ENCODE measurements at regions of chr3 and their contacts with region 1.

Region 1: DNA sequence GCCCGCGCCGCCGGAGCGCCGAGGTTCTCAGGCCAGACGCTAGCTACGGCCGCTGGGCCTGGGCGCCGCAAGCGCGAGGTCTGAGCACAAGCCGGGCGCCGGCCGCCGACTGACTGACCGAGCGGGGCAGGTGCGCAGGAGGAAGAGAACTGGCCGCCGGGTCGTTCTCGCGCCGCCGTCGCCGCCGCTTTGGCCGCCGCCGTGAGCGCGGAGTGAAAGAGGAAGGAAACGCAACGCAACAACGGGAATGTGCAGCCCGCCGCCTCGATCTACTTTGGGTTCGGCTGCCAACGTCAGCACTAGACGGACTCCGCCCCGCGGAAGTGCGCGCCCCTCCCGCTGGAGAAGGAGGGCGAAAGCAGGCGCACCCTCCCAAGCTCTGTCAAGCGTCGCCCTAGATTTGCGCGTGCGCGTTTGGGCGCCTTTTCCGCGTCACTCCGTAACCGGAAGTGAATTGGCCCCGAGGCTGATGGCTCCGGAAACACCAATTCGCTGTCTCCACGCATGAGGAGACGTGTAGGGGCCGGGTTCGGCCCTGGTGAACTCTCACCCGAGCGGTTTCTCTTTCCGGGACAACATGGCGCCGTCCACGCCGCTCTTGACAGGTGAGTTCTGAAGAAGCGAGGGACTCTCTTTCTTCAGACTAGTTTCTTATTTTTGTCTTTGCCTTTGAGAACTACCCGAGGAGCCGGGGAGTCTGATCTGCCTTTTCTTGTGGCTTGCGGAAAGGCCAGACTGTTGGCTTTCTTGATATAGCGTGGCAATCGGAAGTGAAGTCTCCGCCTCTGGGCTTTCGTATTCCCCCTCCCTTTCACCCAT is at the starts of genes EIF2A and SERP1:
- DNase-seq: peak; percentile 99
- H3K4me3 Mint-ChIP-seq: peak within 1 kb of the TSS; percentile 85
- H3K27ac Mint-ChIP-seq: peak within 1 kb of the TSS; percentile 97
- H3K4me1 Mint-ChIP-seq: peaks cover 61% of the 10 kb centered on the region
- H3K27me3 Mint-ChIP-seq: no peaks in the 10 kb centered on the region
- total RNA-seq, gene EIF2A: 81.7 to 86.4 TPM
- total RNA-seq, gene SERP1: 98.4 to 98.5 TPM

Region 2: DNA sequence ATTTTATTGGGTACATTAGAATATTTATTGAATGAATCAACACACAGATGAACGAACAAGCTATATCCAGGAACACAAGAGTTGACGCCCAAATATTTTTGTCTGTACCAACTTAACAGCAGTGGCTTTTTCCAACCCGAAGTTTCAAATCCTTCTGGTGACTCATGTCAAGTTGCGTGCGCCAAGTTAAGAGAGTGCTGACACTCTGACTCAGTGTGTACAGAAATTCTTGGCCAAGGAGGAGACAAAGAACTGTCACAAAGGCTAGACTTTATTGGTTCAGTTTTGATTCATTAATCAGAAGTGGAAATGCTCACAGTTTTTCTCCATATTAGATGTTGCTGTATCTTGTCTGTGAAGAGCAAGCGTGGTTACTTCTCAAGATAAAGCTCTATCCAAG is 197.9 kb before region 1 on chr3:
- CTCF ChIA-PET with region 1: no interaction called
- POLR2A ChIA-PET with region 1: no interaction called
- DNase-seq: peak; percentile 19
- H3K4me3 Mint-ChIP-seq: no peak overlapping the region
- H3K27ac Mint-ChIP-seq: no peak overlapping the region
- H3K4me1 Mint-ChIP-seq: peaks cover 4% of the 10 kb centered on the region
- H3K27me3 Mint-ChIP-seq: peaks cover 14% of the 10 kb centered on the region

Region 3: GRCh38 chr3:150408221-150409102 is 138.0 kb before region 1 on chr3 and contains the start of gene TSC22D2:
- CTCF ChIA-PET with region 1: interaction called, 4 read pairs
- POLR2A ChIA-PET with region 1: interaction called, 73 read pairs
- DNase-seq: peak; percentile 93
- H3K4me3 Mint-ChIP-seq: peak within 1 kb of the TSS; percentile 80
- H3K27ac Mint-ChIP-seq: peak within 1 kb of the TSS; percentile 91
- H3K4me1 Mint-ChIP-seq: peaks cover 33% of the 10 kb centered on the region
- H3K27me3 Mint-ChIP-seq: peaks cover 4% of the 10 kb centered on the region
- total RNA-seq, gene TSC22D2: 13.9 to 15.0 TPM

Region 4: DNA sequence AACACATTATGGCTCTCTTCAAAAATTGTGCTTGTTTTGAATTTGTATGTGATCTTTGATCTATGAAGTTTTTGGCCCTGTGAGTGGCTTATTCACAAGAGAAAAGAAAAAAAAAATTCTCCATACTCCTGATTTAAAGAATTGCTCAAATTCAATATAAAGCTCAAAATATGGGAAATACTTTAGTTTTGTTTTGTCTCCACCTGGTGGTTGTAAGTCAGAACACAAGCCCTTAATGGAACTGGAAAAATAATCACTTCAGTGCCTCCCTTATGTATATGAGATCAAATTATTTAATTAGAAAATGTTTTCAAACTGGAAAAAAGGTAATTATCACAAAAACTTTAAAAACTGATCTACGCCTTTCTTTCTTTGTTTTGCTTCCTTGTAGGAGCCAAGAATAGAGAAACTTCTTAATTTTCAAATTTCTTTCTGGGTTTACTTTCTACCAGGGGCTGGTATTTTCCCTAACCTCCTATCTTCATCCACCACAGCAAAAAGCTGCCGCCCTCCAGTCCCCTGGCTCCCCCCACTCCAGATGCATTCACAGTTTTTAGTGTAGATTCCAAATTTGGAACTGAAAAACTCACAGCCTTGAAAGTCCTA is 50.8 kb before region 1 on chr3:
- CTCF ChIA-PET with region 1: no interaction called
- POLR2A ChIA-PET with region 1: no interaction called
- DNase-seq: no peak
- H3K4me3 Mint-ChIP-seq: no peak overlapping the region
- H3K27ac Mint-ChIP-seq: no peak overlapping the region
- H3K4me1 Mint-ChIP-seq: no peaks in the 10 kb centered on the region
- H3K27me3 Mint-ChIP-seq: no peaks in the 10 kb centered on the region

Region 5: GRCh38 chr3:150582620-150583019 is 36.2 kb after region 1 on chr3:
- CTCF ChIA-PET with region 1: interaction called, 3 read pairs
- POLR2A ChIA-PET with region 1: interaction called, 14 read pairs
- DNase-seq: no peak
- H3K4me3 Mint-ChIP-seq: peak overlapping the region; percentile 49
- H3K27ac Mint-ChIP-seq: peak overlapping the region; percentile 75
- H3K4me1 Mint-ChIP-seq: peaks cover 22% of the 10 kb centered on the region
- H3K27me3 Mint-ChIP-seq: no peaks in the 10 kb centered on the region

Region 6: DNA sequence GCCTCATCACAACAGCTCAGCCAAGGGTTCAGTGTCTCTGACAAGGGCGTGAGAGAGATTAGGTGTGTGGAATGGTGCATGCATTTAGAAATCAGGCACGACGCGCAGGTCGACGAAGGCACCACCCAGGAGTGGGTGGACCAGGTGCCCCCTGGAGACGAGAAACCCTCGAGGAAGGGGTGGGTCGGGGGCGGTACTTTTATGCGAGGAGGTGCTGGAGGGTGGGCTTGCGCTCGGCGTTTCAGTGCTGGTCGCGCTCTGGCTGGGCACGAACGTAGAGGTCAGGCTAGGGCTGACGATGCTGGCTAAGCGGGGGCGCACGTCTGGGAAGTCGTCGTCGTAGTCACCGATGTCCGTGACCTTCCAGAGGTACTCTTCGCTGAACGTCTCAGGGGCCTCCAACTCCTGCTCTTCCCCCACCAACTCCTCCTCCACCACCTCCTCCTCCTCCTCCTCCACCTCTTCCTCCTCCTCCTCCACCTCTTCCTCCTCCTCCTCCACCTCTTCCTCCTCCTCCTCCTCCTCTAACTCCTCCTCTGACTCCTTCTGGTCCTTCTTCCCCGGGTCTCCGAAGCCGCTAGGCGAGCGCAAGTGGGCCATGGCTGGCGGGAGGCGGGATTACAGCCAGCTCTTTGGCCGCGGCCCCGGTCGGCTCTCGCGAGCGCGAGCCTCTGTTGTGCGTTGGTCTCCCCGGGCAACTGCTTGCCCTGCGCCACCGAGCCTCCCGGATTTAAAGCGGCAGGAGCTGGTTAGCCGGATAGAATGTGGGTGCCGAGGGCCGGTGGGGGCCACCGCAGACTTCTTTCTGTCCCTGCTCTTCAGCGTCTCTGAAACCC is 157.1 kb after region 1 on chr3 and contains the start of gene ERICH6:
- CTCF ChIA-PET with region 1: interaction called, 4 read pairs
- POLR2A ChIA-PET with region 1: interaction called, 40 read pairs
- DNase-seq: peak; percentile 89
- H3K4me3 Mint-ChIP-seq: peak within 1 kb of the TSS; percentile 83
- H3K27ac Mint-ChIP-seq: peak within 1 kb of the TSS; percentile 86
- H3K4me1 Mint-ChIP-seq: peaks cover 29% of the 10 kb centered on the region
- H3K27me3 Mint-ChIP-seq: peaks cover 6% of the 10 kb centered on the region
- total RNA-seq, gene ERICH6: 0.38 to 0.81 TPM

Region 7: DNA sequence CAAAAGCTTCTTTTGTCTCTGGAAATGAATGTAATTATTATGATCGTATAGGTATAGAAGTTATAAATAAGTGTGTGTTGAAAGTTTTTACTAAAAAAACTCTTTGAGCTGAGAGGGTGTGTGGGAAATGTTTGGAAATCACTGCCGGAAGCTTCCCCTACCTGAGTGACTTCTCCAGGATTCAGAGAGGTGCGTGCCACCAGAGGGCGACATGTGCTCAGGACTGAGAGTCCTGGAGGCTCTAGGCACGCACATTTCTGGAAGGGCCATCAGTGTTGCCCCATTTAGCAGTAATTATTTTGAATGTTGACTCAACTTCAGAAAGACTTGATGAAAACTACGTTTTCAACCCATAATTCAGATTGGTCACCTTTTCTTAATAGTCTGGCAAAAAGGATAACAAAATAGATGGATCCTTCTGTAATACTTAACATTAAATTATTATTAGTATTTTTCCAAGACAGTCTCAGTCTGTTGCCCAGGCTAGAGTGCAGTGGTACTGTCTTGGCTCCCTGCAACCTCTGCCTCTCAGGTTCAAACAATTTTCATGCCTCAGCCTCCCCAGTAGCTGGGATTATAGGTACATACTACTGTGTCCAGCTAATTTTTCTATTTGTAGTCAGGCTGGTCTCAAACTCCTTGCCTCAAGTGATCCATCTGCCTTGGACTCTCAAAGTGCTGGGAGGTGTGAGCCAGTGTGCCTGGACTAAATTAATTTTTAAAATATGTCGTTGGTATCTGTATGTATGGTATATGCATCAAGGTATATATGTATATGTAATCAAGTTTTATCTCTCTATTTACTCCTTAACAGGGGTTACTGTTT is 622.0 kb after region 1 on chr3:
- CTCF ChIA-PET with region 1: no interaction called
- POLR2A ChIA-PET with region 1: no interaction called
- DNase-seq: peak; percentile 86
- H3K4me3 Mint-ChIP-seq: no peak overlapping the region
- H3K27ac Mint-ChIP-seq: no peak overlapping the region
- H3K4me1 Mint-ChIP-seq: peaks cover 48% of the 10 kb centered on the region
- H3K27me3 Mint-ChIP-seq: no peaks in the 10 kb centered on the region

Region 8: DNA sequence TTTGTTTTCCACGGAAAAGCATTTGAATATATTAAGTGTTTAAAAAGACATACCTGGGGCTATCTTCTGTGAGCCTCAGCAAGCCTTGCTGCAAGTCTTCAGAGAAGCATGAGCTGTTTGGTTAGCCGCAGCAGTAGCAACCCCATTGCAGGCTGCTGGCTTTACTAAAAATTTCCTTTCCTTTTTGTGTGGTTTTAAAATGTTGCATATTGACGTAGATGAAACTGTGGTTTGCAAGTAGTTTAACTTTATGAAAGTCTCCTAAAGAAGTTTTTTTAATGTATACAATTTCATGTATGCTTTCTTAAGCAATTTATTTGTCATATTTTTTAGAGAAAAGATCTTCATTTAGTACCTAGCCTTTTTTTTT is 656.6 kb after region 1 on chr3 and contains the start of gene GPR171:
- CTCF ChIA-PET with region 1: no interaction called
- POLR2A ChIA-PET with region 1: interaction called, 16 read pairs
- DNase-seq: peak; percentile 82
- H3K4me3 Mint-ChIP-seq: peak within 1 kb of the TSS; percentile 90
- H3K27ac Mint-ChIP-seq: peak within 1 kb of the TSS; percentile 98
- H3K4me1 Mint-ChIP-seq: peaks cover 60% of the 10 kb centered on the region
- H3K27me3 Mint-ChIP-seq: no peaks in the 10 kb centered on the region
- total RNA-seq, gene GPR171: 204 to 222 TPM

Measured in activated CD4-positive, alpha-beta memory T cell treated with anti-CD3 and anti-CD28 coated beads, Interleukin-2, amount 10 ng/mL, durations not matched to agents 7 days and 5 days (primary cell).